A549 (cell line): ENCODE measurements at regions of chr12 and their contacts with region 1.

Region 1: GRCh38 chr12:52221912-52222457 is 11.1 kb upstream of the KRT7 start:
- DNase-seq: peak in 1 of 2 experiments; percentile 90
- ATAC-seq: peak; percentile 91 to 97
- H3K4me3 ChIP-seq: no peak overlapping the region
- H3K27ac ChIP-seq: peak overlapping the region; percentile 82 to 90
- H3K4me1 ChIP-seq: peaks cover 62% of the 10 kb centered on the region
- CTCF ChIP-seq: peak; percentile 82
- EP300 ChIP-seq: no peak
- POLR2A ChIP-seq: no peak
- RAD21 ChIP-seq: peak; percentile 64 to 67

Region 2: DNA sequence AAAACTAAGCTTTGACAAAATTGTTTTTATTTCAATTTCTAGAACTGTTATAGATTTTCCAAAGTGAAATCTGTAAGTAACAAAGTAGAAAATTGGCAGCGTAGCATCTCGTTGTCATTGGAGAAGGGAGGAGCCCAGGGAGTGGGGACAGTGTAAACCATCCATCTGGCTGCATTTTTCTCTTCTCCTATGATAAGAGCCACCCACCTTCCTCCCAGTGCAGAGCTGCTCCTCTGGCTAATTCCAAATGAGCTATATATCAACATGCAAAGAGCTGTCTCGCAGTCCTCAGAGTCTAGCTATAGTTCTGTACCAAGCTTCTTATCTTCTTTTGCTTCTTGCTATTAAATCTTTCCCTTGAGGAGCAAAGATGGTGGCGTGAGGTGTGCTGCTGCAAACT is 574.3 kb before region 1 on chr12:
- CTCF ChIA-PET with region 1: no interaction called
- POLR2A ChIA-PET with region 1: no interaction called
- DNase-seq: no peak
- ATAC-seq: no peak
- H3K4me3 ChIP-seq: no peak overlapping the region
- H3K27ac ChIP-seq: no peak overlapping the region
- H3K4me1 ChIP-seq: no peaks in the 10 kb centered on the region
- CTCF ChIP-seq: no peak
- EP300 ChIP-seq: no peak
- POLR2A ChIP-seq: no peak
- RAD21 ChIP-seq: no peak

Region 3: DNA sequence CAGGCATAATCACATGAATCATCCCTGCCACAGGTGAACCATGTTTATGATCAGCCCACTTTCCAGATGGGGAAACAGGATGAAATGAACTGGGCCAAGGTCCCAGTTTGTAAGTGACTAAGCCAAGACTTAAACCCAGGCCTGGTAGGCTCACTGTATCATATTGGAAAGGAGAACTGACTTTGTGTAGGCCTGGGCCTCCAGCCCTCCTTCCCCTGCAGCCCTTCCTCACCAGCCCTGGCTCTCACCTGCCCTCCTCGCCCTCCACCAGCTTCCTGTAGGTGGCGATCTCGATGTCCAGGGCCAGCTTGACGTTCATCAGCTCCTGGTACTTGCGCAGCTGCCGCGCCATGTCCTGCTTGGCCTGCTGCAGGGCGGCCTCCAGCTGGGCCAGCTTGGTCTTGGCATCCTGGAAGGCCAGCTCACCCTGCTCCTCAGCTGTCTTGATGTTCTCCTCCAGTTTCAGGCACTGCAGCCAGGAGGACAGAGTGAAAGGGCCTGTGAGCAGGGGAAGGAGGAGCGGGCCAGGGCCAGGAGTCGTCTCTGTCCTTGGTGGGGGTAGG is 50.0 kb before region 1 on chr12:
- CTCF ChIA-PET with region 1: interaction called, 21 read pairs
- POLR2A ChIA-PET with region 1: no interaction called
- DNase-seq: peak; percentile 66 to 87
- ATAC-seq: peak; percentile 35 to 72
- H3K4me3 ChIP-seq: no peak overlapping the region
- H3K27ac ChIP-seq: peak overlapping the region; percentile 70 to 85
- H3K4me1 ChIP-seq: peaks cover 82% of the 10 kb centered on the region
- CTCF ChIP-seq: peak; percentile 63
- EP300 ChIP-seq: no peak
- POLR2A ChIP-seq: no peak
- RAD21 ChIP-seq: peak; percentile 64 to 73

Region 4: GRCh38 chr12:52192173-52192791 is 29.7 kb before region 1 on chr12:
- CTCF ChIA-PET with region 1: interaction called, 44 read pairs
- POLR2A ChIA-PET with region 1: interaction called, 9 read pairs
- DNase-seq: peak; percentile 99
- ATAC-seq: peak; percentile 91 to 92
- H3K4me3 ChIP-seq: peak overlapping the region; percentile 64
- H3K27ac ChIP-seq: peak overlapping the region; percentile 96 to 100
- H3K4me1 ChIP-seq: peaks cover 76% of the 10 kb centered on the region
- CTCF ChIP-seq: no peak
- EP300 ChIP-seq: peak; percentile 80 to 86; a peak in 4 of 5 replicates
- POLR2A ChIP-seq: no peak
- RAD21 ChIP-seq: peak in 1 of 2 experiments; percentile 27; a peak in 2 of 5 replicates

Region 5: DNA sequence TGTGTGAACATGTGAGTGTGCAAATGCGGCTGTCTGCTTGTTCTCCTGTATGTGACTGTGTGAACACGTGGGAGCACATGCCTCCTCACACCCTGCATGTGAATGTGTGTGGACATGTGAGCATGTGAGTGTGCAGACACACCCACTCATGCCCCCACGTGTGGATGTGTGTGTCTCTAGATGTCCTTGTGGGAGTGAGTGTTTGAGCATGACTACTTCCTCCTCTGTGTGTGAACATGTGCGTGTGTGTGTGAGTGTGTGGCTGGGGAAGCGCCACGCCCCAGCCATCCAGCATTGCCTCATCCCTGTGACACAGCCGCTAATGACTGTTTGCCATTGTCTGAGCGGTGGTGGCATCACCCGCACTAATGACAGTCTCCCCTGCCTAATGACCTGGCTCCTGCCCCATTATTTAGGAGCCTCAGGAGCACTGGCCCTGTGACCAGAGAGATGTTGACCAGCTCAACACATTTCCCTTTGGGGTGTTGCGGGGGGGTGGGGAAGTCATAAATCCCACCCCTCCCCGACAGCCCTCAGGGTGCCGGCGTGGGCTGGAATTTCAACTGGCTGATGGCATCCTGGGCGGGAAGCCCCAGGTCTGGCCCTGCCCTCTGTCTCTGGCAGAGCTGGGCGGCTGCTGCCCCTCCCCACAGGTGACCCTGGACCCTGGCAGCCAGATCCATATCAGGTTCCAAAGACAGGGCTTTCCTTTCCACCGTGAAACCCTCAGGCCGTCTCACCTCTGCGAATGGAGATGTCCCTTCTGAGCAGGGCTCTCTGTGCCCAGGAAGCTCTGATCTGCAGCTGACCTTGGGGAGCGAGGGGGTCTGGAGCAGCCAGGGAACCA is 18.7 kb before region 1 on chr12:
- CTCF ChIA-PET with region 1: interaction called, 175 read pairs
- POLR2A ChIA-PET with region 1: no interaction called
- DNase-seq: peak; percentile 66 to 96
- ATAC-seq: peak; percentile 67 to 75
- H3K4me3 ChIP-seq: no peak overlapping the region
- H3K27ac ChIP-seq: peak overlapping the region; percentile 87 to 96
- H3K4me1 ChIP-seq: peaks cover 90% of the 10 kb centered on the region
- CTCF ChIP-seq: no peak
- EP300 ChIP-seq: peak; percentile 73; a peak in 3 of 5 replicates
- POLR2A ChIP-seq: no peak
- RAD21 ChIP-seq: no peak

Region 6: GRCh38 chr12:52243856-52244614 is 22.1 kb after region 1 on chr12:
- CTCF ChIA-PET with region 1: interaction called, 182 read pairs
- POLR2A ChIA-PET with region 1: interaction called, 9 read pairs
- DNase-seq: peak; percentile 92 to 93
- ATAC-seq: peak; percentile 22 to 31
- H3K4me3 ChIP-seq: peak overlapping the region; percentile 24; the same call in 1 of the 3 replicates
- H3K27ac ChIP-seq: peak overlapping the region; percentile 92 to 97
- H3K4me1 ChIP-seq: peaks cover 100% of the 10 kb centered on the region
- CTCF ChIP-seq: no peak
- EP300 ChIP-seq: peak; percentile 55 to 80; a peak in 3 of 5 replicates
- POLR2A ChIP-seq: no peak
- RAD21 ChIP-seq: no peak; a peak in 2 of 5 replicates

Region 7: DNA sequence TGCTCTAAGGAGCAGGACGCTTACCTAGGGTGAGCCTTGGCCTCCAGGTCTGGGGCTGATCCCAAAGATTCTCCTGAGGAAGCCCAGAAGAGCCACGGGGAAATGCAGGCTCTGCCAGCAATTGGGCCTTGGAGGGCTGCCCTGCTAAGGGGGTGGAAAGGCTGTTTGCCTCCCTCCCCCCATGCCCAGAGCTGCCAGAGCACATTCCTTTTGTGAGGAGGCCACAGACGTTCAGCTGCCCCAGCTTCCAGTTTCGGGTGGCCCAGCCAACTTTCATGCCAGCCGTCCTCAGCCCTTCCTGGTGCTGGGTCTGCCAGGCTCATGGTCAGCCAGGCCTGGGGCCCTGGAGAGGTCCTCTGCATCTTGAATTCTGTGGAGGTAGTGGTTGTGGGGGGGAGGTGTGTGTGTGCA is 27.1 kb after region 1 on chr12:
- CTCF ChIA-PET with region 1: interaction called, 48 read pairs
- POLR2A ChIA-PET with region 1: interaction called, 9 read pairs
- DNase-seq: peak in 1 of 2 experiments; percentile 71
- ATAC-seq: peak; percentile 0; a peak in 2 of 6 replicates
- H3K4me3 ChIP-seq: no peak overlapping the region
- H3K27ac ChIP-seq: peak overlapping the region; percentile 92 to 97
- H3K4me1 ChIP-seq: peaks cover 96% of the 10 kb centered on the region
- CTCF ChIP-seq: no peak
- EP300 ChIP-seq: no peak
- POLR2A ChIP-seq: no peak; the same call in 1 of the 2 replicates
- RAD21 ChIP-seq: 0 out of 5 replicates have a peak, but pooled peaks of 1 of the 2 experiments have one; percentile 2

Region 8: GRCh38 chr12:52346593-52346992 is 124.6 kb after region 1 on chr12:
- CTCF ChIA-PET with region 1: no interaction called
- POLR2A ChIA-PET with region 1: no interaction called
- DNase-seq: no peak
- ATAC-seq: peak in 1 of 2 experiments; percentile 17; a peak in 2 of 6 replicates
- H3K4me3 ChIP-seq: no peak overlapping the region
- H3K27ac ChIP-seq: peak overlapping the region in 1 of 2 experiments; percentile 62; a peak in 2 of 6 replicates
- H3K4me1 ChIP-seq: peaks cover 17% of the 10 kb centered on the region
- CTCF ChIP-seq: no peak
- EP300 ChIP-seq: no peak
- POLR2A ChIP-seq: no peak
- RAD21 ChIP-seq: no peak